A673 (cell line): ENCODE measurements at regions of chr2 and their contacts with region 1.

Region 1: DNA sequence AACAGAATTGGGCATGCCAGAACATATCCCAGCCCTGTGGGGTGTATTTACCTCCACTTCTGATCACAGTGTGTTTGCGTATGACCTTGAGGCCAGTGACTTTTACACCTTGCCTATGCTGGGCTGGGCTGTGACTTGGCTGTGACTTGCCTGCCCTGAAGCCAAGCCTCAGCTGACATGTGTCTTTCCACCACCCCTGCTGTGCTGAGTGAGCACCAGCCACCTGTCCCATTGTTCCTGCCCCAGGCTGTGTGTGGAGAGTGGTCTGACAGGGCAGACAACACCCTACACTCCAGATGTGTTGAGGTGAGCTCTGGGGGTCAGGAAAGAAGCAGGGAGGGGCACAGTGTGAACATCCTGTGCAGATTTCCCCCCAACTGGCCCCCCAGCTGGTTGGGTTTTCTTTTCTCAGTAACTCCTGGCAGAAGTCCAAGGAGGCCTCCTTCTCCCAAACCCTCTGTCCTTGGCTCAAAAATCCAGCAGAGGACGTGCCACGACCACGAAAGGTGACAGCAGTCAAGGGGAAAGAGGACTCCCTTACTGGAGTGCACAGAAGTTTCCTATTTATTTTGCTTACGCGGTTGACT is 5.1 kb upstream of the STEAP3 start:
- DNase-seq: peak; percentile 81
- H3K4me3 ChIP-seq: no peak overlapping the region
- H3K27ac ChIP-seq: no peak overlapping the region
- H3K4me1 ChIP-seq: peaks cover 7% of the 10 kb centered on the region
- H3K27me3 ChIP-seq: no peaks in the 10 kb centered on the region
- CTCF ChIP-seq: peak; percentile 50

Region 2: DNA sequence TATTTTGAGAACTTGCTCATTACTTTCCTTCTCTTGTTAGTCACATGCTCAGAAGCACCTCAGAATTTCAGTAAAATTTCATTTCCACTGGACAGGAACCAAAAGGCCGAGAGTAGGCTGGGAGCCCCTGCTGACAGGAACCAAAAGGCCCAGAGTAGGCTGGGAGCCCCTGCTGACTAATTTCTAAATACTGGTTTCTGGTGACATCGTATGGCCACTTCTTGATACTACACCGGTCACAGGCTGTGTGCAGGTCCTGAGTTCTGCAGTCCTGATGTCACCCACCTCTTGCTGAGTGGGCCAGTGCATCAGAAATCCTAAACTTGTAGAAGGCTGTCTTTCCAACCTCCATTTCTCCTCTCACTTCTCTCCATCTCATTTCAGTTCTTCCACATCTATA is 353.5 kb before region 1 on chr2:
- CTCF ChIA-PET with region 1: no interaction called
- POLR2A ChIA-PET with region 1: no interaction called
- intact Hi-C with region 1: no loop called
- DNase-seq: peak; percentile 49
- H3K4me3 ChIP-seq: no peak overlapping the region
- H3K27ac ChIP-seq: no peak overlapping the region
- H3K4me1 ChIP-seq: no peaks in the 10 kb centered on the region
- H3K27me3 ChIP-seq: peaks cover 12% of the 10 kb centered on the region
- CTCF ChIP-seq: peak; percentile 66

Region 3: DNA sequence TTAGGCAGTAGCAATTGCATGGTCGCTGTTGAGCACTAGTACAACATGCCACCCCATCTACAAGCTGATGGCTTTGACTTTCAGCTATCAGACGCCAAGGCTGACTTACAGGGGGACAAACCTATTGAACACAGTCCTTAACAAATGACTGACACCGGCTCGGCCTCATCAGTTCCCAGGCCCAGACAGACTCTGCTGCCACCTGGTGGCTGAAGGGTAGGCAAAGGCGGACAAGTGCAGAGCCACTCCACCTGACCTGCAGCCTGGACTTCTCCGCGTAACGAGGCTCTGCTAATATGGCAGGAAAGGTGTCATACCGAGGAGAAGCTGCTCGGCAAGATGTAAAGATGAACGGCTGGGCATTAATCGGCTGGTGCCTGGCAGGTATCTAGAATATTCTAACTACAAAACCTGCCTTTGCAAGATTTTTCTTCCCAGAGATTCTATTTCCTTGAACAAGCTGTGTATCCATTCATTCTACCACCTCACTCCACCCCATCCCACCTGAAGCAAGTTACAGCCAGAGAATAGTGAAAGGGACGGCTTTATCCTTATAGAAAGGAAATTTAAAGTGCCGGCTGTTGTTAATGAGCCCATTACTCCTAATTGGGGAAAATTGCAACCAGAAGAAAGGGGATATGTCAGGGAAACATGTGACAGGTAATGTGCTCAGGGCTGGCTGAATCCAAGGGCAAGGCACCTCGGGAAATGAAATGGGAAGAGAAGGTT is 72.5 kb after region 1 on chr2:
- CTCF ChIA-PET with region 1: no interaction called
- POLR2A ChIA-PET with region 1: no interaction called
- intact Hi-C with region 1: loop called (anchors 1 kb)
- DNase-seq: peak; percentile 75
- H3K4me3 ChIP-seq: no peak overlapping the region
- H3K27ac ChIP-seq: no peak overlapping the region
- H3K4me1 ChIP-seq: no peaks in the 10 kb centered on the region
- H3K27me3 ChIP-seq: no peaks in the 10 kb centered on the region
- CTCF ChIP-seq: peak; percentile 79

Region 4: GRCh38 chr2:119359774-119360173 is 141.2 kb after region 1 on chr2:
- CTCF ChIA-PET with region 1: no interaction called
- POLR2A ChIA-PET with region 1: no interaction called
- intact Hi-C with region 1: no loop called
- DNase-seq: no peak
- H3K4me3 ChIP-seq: no peak overlapping the region
- H3K27ac ChIP-seq: no peak overlapping the region
- H3K4me1 ChIP-seq: no peaks in the 10 kb centered on the region
- H3K27me3 ChIP-seq: no peaks in the 10 kb centered on the region
- CTCF ChIP-seq: no peak